CD4-positive, alpha-beta T cell (primary cell): ENCODE measurements at regions of chr19 and their contacts with region 1.

Region 1: GRCh38 chr19:13774217-13775191 is at the start of gene C19orf53:
- DNase-seq: peak; percentile 77 to 93 (median 86)
- ATAC-seq: peak; percentile 92
- H3K4me3 ChIP-seq: peak within 1 kb of the TSS; percentile 85
- H3K4me3 Mint-ChIP-seq: peak within 1 kb of the TSS; percentile 99
- H3K27ac ChIP-seq: peak within 1 kb of the TSS; percentile 80 to 84
- H3K27ac Mint-ChIP-seq: peak within 1 kb of the TSS; percentile 93
- H3K4me1 ChIP-seq: peaks cover 35% of the 10 kb centered on the region
- H3K4me1 Mint-ChIP-seq: peaks cover 29% of the 10 kb centered on the region
- H3K27me3 ChIP-seq: no peaks in the 10 kb centered on the region
- H3K27me3 Mint-ChIP-seq: no peaks in the 10 kb centered on the region
- CTCF ChIP-seq: no peak
- total RNA-seq, gene C19orf53: 119 TPM

Region 2: GRCh38 chr19:13731147-13731964 is 43.1 kb before region 1 on chr19:
- CTCF ChIA-PET with region 1: no interaction called
- POLR2A ChIA-PET with region 1: interaction called, 4 read pairs
- intact Hi-C with region 1: loop called in 1 of 2 experiments (anchors 1 kb)
- DNase-seq: peak; percentile 87 to 96 (median 94)
- ATAC-seq: peak; percentile 100
- H3K4me3 ChIP-seq: peak overlapping the region; percentile 67
- H3K4me3 Mint-ChIP-seq: peak overlapping the region; percentile 89
- H3K27ac ChIP-seq: peak overlapping the region; percentile 26 to 41
- H3K27ac Mint-ChIP-seq: peak overlapping the region; percentile 51
- H3K4me1 ChIP-seq: peaks cover 20% of the 10 kb centered on the region
- H3K4me1 Mint-ChIP-seq: peaks cover 14% of the 10 kb centered on the region
- H3K27me3 ChIP-seq: no peaks in the 10 kb centered on the region
- H3K27me3 Mint-ChIP-seq: no peaks in the 10 kb centered on the region
- CTCF ChIP-seq: no peak

Region 3: DNA sequence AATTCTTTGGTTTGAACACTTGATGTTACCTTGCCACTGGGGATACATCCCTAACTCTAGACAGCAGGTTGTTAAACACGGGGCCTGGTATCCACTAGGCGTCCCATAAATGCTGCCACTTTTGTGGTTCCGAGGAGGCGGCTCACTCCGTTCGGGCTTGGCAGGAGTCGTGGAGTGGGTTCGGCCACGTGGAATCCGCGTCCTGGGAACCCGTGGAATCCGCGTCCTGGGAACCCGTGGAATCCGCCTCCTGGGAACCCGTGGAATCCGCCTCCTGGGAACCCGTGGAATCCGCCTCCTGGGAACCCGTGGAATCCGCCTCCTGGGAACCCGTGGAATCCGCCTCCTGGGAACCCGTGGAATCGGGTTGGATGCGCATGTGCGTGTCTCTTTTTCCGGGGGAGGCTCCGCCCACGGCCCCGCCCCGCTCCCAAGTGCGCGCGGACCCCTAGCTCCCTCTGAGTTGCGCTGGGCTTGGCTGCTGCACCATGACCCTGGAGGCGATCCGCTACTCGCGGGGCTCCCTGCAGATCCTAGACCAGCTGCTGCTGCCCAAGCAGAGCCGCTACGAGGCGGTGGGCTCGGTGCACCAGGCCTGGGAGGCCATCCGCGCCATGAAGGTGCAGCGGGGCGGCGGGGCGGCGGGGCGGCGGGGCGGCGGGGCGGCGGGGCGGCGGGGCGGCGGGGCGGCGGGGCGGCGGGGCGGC is 10.2 kb before region 1 on chr19 and contains the start of gene MRI1:
- CTCF ChIA-PET with region 1: no interaction called
- POLR2A ChIA-PET with region 1: interaction called, 22 read pairs
- intact Hi-C with region 1: no loop called
- DNase-seq: peak; percentile 26 to 80 (median 58)
- ATAC-seq: peak; percentile 74
- H3K4me3 ChIP-seq: peak within 1 kb of the TSS; percentile 76
- H3K4me3 Mint-ChIP-seq: peak within 1 kb of the TSS; percentile 94
- H3K27ac ChIP-seq: peak within 1 kb of the TSS; percentile 22 to 70
- H3K27ac Mint-ChIP-seq: peak within 1 kb of the TSS; percentile 80
- H3K4me1 ChIP-seq: peaks cover 20% of the 10 kb centered on the region
- H3K4me1 Mint-ChIP-seq: peaks cover 21% of the 10 kb centered on the region
- H3K27me3 ChIP-seq: no peaks in the 10 kb centered on the region
- H3K27me3 Mint-ChIP-seq: no peaks in the 10 kb centered on the region
- CTCF ChIP-seq: no peak
- total RNA-seq, gene MRI1: 20.4 to 21.1 TPM

Region 4: GRCh38 chr19:13794757-13795589 is 20.5 kb after region 1 on chr19 and contains the start of gene ZSWIM4:
- CTCF ChIA-PET with region 1: no interaction called
- POLR2A ChIA-PET with region 1: interaction called, 36 read pairs
- intact Hi-C with region 1: loop called (anchors 1 to 2 kb)
- DNase-seq: peak; percentile 66 to 97 (median 90)
- ATAC-seq: peak; percentile 85
- H3K4me3 ChIP-seq: peak within 1 kb of the TSS; percentile 70
- H3K4me3 Mint-ChIP-seq: peak within 1 kb of the TSS; percentile 96
- H3K27ac ChIP-seq: peak within 1 kb of the TSS; percentile 59 to 64
- H3K27ac Mint-ChIP-seq: peak within 1 kb of the TSS; percentile 90
- H3K4me1 ChIP-seq: peaks cover 34% of the 10 kb centered on the region
- H3K4me1 Mint-ChIP-seq: peaks cover 40% of the 10 kb centered on the region
- H3K27me3 ChIP-seq: no peaks in the 10 kb centered on the region
- H3K27me3 Mint-ChIP-seq: no peaks in the 10 kb centered on the region
- CTCF ChIP-seq: no peak
- total RNA-seq, gene ZSWIM4: 3.5 to 3.8 TPM

Region 5: DNA sequence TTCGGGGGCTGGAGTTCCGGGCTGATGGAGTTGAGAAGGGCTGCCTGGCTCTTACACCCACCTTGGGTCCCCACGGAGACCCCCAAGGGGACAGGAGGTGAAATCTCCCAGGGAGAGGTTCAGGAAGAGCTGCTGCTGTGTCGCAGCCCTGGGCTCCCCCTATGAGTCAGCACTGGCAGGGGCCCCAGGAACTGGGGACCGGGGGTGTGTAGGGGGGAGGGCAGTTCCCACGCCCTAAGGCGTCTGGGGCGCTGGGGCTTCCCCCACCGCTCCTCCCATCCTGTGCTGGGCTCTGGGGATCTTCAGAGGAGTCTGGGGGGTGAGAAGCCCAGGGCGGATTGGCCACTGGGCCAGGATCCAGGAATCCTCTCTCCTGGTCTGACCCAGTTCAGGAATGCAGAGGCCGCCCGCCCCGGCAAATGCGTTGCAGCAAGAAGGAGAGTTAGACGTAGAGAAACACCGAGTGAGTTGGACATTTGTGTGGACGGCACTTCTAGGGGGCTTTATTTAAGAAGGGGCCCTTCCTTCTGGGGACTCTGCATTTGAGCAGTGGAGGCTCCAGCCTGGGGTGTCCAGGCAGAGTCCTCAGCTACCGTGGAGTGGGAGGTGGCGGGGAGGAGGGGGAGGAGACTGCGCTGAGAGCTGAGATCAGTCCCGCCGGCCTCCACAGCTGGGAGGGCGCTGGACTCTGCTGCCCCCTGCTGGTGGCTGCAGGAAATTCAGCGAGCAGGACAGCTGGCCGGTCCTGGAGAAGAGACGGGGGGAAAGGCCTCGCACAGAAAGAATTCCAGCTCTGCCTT is 87.4 kb after region 1 on chr19:
- CTCF ChIA-PET with region 1: interaction called, 18 read pairs
- POLR2A ChIA-PET with region 1: interaction called, 12 read pairs
- intact Hi-C with region 1: no loop called
- DNase-seq: peak; percentile 81 to 96 (median 86)
- ATAC-seq: peak; percentile 84
- H3K4me3 ChIP-seq: peak overlapping the region; percentile 73
- H3K4me3 Mint-ChIP-seq: peak overlapping the region; percentile 94
- H3K27ac ChIP-seq: peak overlapping the region; percentile 84 to 94
- H3K27ac Mint-ChIP-seq: peak overlapping the region; percentile 86
- H3K4me1 ChIP-seq: peaks cover 42% of the 10 kb centered on the region
- H3K4me1 Mint-ChIP-seq: peaks cover 41% of the 10 kb centered on the region
- H3K27me3 ChIP-seq: peaks cover 22 to 25% of the 10 kb centered on the region in 2 experiments
- H3K27me3 Mint-ChIP-seq: peaks cover 30% of the 10 kb centered on the region
- CTCF ChIP-seq: peak; percentile 99